H1 (cell line): ENCODE measurements at regions of chr11 and their contacts with region 1.

Region 1: GRCh38 chr11:14619603-14620531 is 23.7 kb upstream of the PDE3B start:
- DNase-seq: no peak
- H3K4me3 ChIP-seq: no peak overlapping the region
- H3K27ac ChIP-seq: no peak overlapping the region
- H3K4me1 ChIP-seq: no peaks in the 10 kb centered on the region
- H3K27me3 ChIP-seq: peaks cover 0 to 1% (median 0%) of the 10 kb centered on the region in 4 experiments; a peak in 1 of 7 replicates
- CTCF ChIP-seq: no peak
- EP300 ChIP-seq: no peak
- POLR2A ChIP-seq: no peak
- RAD21 ChIP-seq: no peak

Region 2: GRCh38 chr11:14537134-14537599 is 82.7 kb before region 1 on chr11:
- CTCF ChIA-PET with region 1: interaction called, 14 read pairs
- POLR2A ChIA-PET with region 1: no interaction called
- DNase-seq: no peak
- H3K4me3 ChIP-seq: no peak overlapping the region
- H3K27ac ChIP-seq: no peak overlapping the region
- H3K4me1 ChIP-seq: peaks cover 2 to 6% (median 5%) of the 10 kb centered on the region in 4 experiments
- H3K27me3 ChIP-seq: no peaks in the 10 kb centered on the region; a peak in 2 of 7 replicates
- CTCF ChIP-seq: peak in 2 of 3 experiments; percentile 41 to 63; a peak in 2 of 4 replicates
- EP300 ChIP-seq: no peak
- POLR2A ChIP-seq: no peak
- RAD21 ChIP-seq: peak; percentile 67 to 76

Region 3: GRCh38 chr11:14672635-14673034 is 52.8 kb after region 1 on chr11:
- CTCF ChIA-PET with region 1: no interaction called
- POLR2A ChIA-PET with region 1: no interaction called
- DNase-seq: no peak
- H3K4me3 ChIP-seq: no peak overlapping the region
- H3K27ac ChIP-seq: no peak overlapping the region
- H3K4me1 ChIP-seq: no peaks in the 10 kb centered on the region
- H3K27me3 ChIP-seq: no peaks in the 10 kb centered on the region
- CTCF ChIP-seq: no peak
- EP300 ChIP-seq: no peak
- POLR2A ChIP-seq: no peak
- RAD21 ChIP-seq: no peak

Region 4: GRCh38 chr11:14789879-14790484 is 170.1 kb after region 1 on chr11:
- CTCF ChIA-PET with region 1: interaction called, 11 read pairs
- POLR2A ChIA-PET with region 1: no interaction called
- DNase-seq: no peak
- H3K4me3 ChIP-seq: no peak overlapping the region
- H3K27ac ChIP-seq: no peak overlapping the region
- H3K4me1 ChIP-seq: no peaks in the 10 kb centered on the region
- H3K27me3 ChIP-seq: no peaks in the 10 kb centered on the region
- CTCF ChIP-seq: no peak; a peak in 1 of 4 replicates
- EP300 ChIP-seq: no peak
- POLR2A ChIP-seq: no peak
- RAD21 ChIP-seq: peak in 1 of 2 experiments; percentile 22; a peak in 1 of 4 replicates

Region 5: GRCh38 chr11:14892036-14892567 is 272.2 kb after region 1 on chr11 and contains the start of gene CYP2R1:
- CTCF ChIA-PET with region 1: interaction called, 10 read pairs
- POLR2A ChIA-PET with region 1: no interaction called
- DNase-seq: peak; percentile 89 to 92
- H3K4me3 ChIP-seq: peak within 1 kb of the TSS; percentile 51 to 71 (median 63)
- H3K27ac ChIP-seq: no peak within 1 kb of the TSS
- H3K4me1 ChIP-seq: no peaks in the 10 kb centered on the region; a peak in 2 of 7 replicates
- H3K27me3 ChIP-seq: peaks cover 0 to 4% (median 4%) of the 10 kb centered on the region in 4 experiments; a peak in 2 of 7 replicates
- CTCF ChIP-seq: no peak
- EP300 ChIP-seq: no peak
- POLR2A ChIP-seq: no peak
- RAD21 ChIP-seq: no peak
- total RNA-seq, gene CYP2R1: 12.9 and 13.8 TPM in 2 replicates